ENCODE measurements at regions of chr5 and their contacts with region 1.

Region 1: DNA sequence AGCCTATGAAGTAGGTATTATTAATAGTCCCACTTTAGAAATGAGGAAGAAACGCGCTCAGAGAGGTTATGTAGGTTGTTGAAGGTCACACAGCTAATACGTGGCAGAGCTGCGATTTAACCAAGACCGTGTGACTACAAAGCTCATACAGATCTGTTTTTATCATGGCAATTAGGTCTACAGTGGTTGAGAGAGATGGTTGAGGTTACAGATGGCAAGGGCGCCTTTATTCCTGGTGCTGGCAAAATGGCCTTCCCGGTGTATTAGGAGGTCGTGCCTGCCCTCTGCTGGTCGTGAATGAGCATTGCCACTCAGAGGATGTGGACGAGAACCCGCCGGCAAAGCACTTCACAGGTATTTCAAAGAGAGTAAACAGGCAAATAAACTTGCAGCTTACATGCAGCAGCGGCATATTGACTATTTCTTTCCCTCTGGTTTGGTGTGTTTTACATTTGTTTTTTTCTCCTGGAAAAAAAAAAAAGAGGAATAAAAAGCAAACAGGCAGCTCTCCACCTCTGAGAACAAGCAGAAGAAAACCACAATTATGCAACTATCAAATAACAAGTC is 65.3 kb upstream of the EGFLAM start:
- DNase-seq: peak; percentile 76
- CTCF ChIP-seq: peak; percentile 90

Region 2: DNA sequence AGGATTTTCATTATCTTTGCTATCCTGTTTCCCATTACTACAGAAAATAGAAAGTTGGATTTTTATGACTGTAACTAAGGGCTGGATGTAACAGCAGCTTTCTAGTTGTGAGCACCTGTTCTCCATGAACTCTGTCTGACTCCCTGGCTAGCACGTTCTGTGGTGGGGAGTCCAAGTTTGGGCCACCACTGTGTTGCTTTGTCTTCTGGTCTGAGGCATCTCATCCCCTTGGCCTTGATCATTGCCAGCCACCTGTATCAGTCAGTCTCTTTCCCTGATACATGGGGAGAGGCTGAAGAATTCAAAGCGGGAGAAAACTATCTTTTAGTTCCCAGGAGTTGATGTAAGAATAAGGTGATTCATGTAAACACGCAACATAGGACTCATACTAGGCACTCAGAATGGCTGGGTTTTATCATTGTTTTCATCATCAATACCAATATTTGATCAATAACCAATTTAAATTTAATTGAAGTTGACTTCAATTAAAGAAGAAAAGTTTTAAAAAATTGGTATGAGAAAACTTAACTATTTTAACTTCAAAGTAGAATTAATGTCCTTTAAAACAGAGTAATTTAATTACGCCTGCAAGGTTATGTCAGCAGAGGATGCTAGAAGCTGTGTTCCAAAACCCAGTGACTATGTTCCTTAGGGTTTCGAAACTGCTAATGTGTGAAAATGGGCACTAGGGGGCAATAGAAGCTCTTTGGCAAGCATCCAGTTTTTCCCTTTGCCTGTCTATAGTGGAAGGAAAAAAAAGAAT is 780.4 kb before region 1 on chr5:
- in situ Hi-C with region 1: loop called (anchors 25 kb)
- DNase-seq: peak; percentile 67
- CTCF ChIP-seq: peak; percentile 46

Region 3: DNA sequence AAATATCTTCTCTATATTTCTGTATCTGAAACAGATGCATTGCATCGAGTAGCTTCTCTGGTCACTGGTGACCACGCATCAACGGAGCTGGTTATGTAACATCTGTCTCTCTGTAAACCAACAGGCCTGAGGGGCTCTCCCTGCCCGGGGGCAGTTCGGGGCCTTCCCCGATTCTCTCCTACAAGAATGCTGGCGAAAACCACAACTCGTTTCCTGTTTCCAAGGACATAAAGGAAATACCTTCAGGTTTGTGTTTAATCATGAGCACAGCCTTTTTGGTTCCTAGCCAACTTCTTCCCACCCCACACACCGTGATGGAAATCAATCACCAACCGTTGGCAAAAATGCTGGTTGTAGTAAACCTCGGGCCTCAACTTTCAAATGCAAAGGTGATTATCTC is 378.4 kb before region 1 on chr5:
- in situ Hi-C with region 1: no loop called
- DNase-seq: no peak
- CTCF ChIP-seq: no peak

Region 4: DNA sequence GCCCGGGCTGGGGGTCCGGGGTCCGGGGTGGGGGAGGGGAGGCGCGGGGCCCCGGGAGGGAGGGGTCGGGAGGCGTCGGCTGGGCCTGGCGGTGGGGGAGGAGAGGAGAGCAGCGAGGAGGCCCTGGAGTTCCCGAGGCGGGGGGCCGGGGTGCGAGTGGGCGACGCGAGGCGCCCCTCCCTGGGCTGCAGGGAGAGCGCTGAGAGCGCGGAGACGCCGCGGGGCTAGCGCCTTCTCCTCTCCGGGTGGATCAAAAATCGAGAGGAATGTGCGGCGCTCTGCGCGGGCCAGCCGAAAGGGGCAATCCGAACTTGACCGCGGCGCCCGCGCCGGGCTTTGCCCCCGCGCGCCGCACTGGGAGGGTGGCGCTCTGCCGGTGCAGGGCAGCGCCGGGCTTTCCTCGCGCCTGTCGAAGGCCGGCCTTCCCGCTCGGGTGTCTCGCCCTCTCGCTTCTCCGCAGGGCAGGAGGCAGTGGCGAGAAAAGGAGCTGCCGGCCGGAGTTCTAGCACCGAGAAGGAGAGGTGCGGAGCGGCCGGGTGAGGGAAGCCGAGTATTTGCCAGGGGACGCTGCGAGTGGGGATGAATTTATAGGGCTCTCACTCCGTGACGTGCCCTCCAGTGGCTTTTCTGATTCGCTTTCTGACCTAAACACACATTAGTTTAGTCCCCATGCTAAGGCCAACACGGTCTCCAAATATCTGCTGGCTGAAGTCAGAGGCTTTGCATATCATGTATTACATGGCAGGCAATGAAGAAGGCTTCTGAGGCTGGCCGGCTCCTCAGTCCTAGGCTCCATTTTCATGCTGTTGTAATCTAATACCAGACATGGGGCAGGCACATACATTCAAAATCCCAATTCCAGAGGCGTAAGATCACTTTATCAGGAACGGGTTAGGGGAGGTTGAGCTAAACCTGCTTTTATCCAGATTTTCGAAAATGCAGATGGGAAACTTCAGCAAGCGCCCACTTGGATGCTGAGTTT is 352.8 kb before region 1 on chr5:
- in situ Hi-C with region 1: loop called (anchors 10 kb)
- DNase-seq: peak; percentile 34
- CTCF ChIP-seq: no peak

Region 5: DNA sequence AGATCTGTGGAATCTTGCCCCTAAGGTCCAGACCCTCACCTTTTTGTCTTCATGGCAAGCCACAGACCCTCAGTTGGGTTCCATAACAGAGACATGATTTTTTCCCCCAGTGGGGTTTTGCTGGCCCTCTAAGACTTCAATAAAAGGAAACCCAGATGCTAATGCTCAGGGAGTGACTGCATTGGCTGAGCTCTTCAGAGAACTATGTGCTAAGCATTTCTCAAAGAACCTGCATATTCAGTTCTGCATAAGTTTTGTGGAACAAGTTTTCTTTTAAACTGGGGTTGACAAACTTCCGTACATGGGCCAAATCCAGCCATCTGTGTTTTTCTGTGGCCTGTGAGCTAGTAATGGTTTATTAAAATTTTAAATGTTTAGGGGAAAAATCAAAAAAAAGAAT is 193.5 kb before region 1 on chr5:
- in situ Hi-C with region 1: no loop called
- DNase-seq: no peak
- CTCF ChIP-seq: no peak

Measured in GM13976 (cell line).